ENCODE measurements at regions of chr22 and their contacts with region 1.

Region 1: GRCh38 chr22:20130739-20131596 is 636 bp upstream of the ZDHHC8 start:
- DNase-seq: peak; percentile 58 to 88 (median 82)
- ATAC-seq: peak; percentile 71
- H3K4me3 ChIP-seq: peak overlapping the region; percentile 70
- H3K4me3 Mint-ChIP-seq: peak overlapping the region; percentile 85
- H3K27ac ChIP-seq: peak overlapping the region; percentile 38 to 75
- H3K27ac Mint-ChIP-seq: peak overlapping the region; percentile 79
- H3K4me1 ChIP-seq: peaks cover 54% of the 10 kb centered on the region
- H3K4me1 Mint-ChIP-seq: peaks cover 28% of the 10 kb centered on the region
- H3K27me3 ChIP-seq: no peaks in the 10 kb centered on the region
- H3K27me3 Mint-ChIP-seq: no peaks in the 10 kb centered on the region
- CTCF ChIP-seq: no peak

Region 2: DNA sequence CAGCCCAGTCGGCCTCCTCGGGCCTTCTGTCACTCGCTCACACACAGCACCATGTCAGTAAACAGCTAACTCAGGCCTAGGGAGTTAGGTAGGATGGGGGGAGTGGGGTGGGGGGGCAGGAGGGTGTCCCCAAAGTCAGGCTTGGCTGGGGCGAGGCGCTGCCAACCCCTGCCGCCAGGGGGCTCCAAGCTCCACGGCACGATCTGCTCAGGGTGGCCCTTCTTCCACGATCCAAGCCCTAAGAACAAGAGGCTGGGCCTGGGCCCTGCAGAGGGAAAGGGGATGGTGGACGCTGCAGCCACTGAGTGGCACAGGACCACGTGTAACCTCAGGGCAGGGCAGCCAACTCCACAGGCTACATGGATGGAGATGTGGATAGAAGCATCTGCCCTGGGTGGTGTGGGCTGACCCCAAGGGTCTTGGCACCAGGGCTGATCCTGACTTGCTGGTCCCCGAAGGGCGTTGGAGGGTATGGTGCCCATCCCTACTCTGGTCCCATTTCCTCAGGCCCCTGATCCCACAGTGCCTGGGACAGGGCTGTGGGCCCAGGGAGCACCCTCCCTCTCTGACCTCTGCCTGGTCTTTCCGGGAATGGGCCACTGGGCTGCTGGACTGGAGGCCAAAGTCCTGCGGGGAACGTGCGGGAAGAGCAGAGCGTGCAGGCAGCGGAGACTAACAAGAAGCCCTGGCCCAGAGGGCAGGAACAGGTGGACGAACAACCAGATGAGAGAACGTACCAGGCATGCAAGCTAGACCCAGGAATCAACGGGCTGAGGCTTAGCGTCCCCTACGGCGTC is 160.3 kb before region 1 on chr22:
- CTCF ChIA-PET with region 1: interaction called, 22 read pairs
- POLR2A ChIA-PET with region 1: interaction called, 6 read pairs
- intact Hi-C with region 1: loop called in 1 of 2 experiments (anchors 1 kb)
- DNase-seq: peak; percentile 59 to 85 (median 76)
- ATAC-seq: peak; percentile 87
- H3K4me3 ChIP-seq: no peak overlapping the region
- H3K4me3 Mint-ChIP-seq: no peak overlapping the region
- H3K27ac ChIP-seq: no peak overlapping the region
- H3K27ac Mint-ChIP-seq: no peak overlapping the region
- H3K4me1 ChIP-seq: peaks cover 18% of the 10 kb centered on the region
- H3K4me1 Mint-ChIP-seq: peaks cover 16% of the 10 kb centered on the region
- H3K27me3 ChIP-seq: no peaks in the 10 kb centered on the region
- H3K27me3 Mint-ChIP-seq: no peaks in the 10 kb centered on the region
- CTCF ChIP-seq: peak; percentile 90

Region 3: DNA sequence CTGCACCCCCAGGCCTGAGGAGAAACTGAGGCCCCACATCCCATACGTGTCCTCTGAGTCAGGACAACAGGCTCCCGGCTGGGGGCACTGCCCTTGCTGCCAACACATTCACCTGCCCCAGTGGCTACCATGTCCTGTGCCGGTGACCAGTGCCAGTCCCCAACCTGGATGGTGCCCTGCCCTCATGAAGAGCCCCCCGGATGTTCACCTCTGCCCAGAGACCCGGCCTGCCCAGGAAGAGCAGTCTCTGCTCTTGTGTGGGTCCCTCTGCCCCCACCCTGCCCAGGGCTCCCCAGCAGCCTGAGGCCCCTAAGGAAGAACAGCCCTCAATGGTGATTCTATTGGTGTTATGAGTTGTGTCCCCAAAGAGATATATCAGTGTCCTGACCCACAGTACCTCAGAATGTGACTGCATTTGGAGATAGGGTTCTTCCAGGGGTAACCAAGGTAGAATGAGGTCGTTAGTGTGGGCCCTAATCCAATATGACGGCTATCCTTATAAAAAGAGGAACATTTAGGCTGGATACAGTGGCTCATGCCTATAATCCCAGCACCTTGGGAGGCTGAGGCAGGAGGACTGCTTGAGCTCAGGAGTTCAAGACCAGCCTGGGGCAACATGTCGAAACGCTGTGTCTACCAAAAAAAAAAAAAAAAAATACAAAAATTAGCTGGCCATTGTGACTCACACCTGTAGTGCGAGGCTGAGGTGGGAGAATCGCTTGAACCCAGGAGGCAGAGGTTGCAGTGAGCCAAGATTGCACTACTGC is 64.2 kb before region 1 on chr22:
- CTCF ChIA-PET with region 1: no interaction called
- POLR2A ChIA-PET with region 1: no interaction called
- intact Hi-C with region 1: no loop called
- DNase-seq: no peak
- ATAC-seq: no peak
- H3K4me3 ChIP-seq: no peak overlapping the region
- H3K4me3 Mint-ChIP-seq: no peak overlapping the region
- H3K27ac ChIP-seq: no peak overlapping the region
- H3K27ac Mint-ChIP-seq: no peak overlapping the region
- H3K4me1 ChIP-seq: no peaks in the 10 kb centered on the region
- H3K4me1 Mint-ChIP-seq: no peaks in the 10 kb centered on the region
- H3K27me3 ChIP-seq: no peaks in the 10 kb centered on the region
- H3K27me3 Mint-ChIP-seq: no peaks in the 10 kb centered on the region
- CTCF ChIP-seq: no peak

Region 4: DNA sequence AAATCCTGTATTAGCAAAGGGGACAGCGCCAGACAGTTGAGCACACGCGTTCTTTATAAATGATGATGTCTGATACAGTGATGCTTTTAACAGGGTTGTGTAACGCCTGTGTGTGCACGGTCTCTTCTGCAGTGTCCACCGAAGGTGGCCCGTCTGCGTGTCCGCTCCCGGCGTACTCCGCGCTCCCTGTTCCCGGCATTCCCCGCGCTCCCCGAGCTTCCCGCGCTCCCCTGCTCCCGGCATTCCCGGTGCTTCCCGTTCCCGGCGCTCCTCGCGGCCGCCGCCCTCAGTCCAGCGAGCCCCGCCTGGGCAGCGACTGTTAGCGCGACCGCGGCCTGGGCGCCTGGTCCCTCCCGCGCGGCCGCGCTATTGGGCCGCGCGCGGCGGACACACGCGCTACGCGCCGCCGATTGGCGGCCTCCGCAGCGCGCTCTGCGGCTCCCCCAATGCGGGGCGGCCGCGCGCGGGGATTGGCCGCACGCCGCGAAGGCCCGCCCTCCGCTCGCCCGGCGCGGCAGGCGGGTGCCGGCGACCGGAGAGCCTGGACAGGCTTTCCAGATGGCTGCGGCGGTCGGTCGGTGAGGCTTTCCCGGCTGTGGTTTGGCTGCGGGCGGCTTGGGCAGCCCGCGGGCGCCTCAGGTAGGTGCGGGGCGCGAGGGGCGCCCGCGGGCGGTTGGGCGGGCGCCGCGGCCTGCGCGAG is 51.1 kb before region 1 on chr22 and contains the start of gene DGCR8:
- CTCF ChIA-PET with region 1: interaction called, 3 read pairs
- POLR2A ChIA-PET with region 1: no interaction called
- intact Hi-C with region 1: loop called in 1 of 2 experiments (anchors 2 kb)
- DNase-seq: peak; percentile 24 to 92 (median 62)
- ATAC-seq: peak; percentile 89
- H3K4me3 ChIP-seq: peak within 1 kb of the TSS; percentile 76
- H3K4me3 Mint-ChIP-seq: peak within 1 kb of the TSS; percentile 99
- H3K27ac ChIP-seq: peak within 1 kb of the TSS; percentile 52 to 53
- H3K27ac Mint-ChIP-seq: peak within 1 kb of the TSS; percentile 90
- H3K4me1 ChIP-seq: peaks cover 45% of the 10 kb centered on the region
- H3K4me1 Mint-ChIP-seq: peaks cover 44% of the 10 kb centered on the region
- H3K27me3 ChIP-seq: no peaks in the 10 kb centered on the region
- H3K27me3 Mint-ChIP-seq: no peaks in the 10 kb centered on the region
- CTCF ChIP-seq: no peak
- total RNA-seq, gene DGCR8: 17.8 to 18.5 TPM

Region 5: GRCh38 chr22:20205964-20206708 is 75.2 kb after region 1 on chr22:
- CTCF ChIA-PET with region 1: no interaction called
- POLR2A ChIA-PET with region 1: no interaction called
- intact Hi-C with region 1: loop called in 1 of 2 experiments (anchors 5 kb)
- DNase-seq: peak; percentile 38 to 86 (median 66)
- ATAC-seq: peak; percentile 97
- H3K4me3 ChIP-seq: peak overlapping the region; percentile 75
- H3K4me3 Mint-ChIP-seq: peak overlapping the region; percentile 97
- H3K27ac ChIP-seq: peak overlapping the region; percentile 70 to 73
- H3K27ac Mint-ChIP-seq: peak overlapping the region; percentile 90
- H3K4me1 ChIP-seq: peaks cover 40% of the 10 kb centered on the region
- H3K4me1 Mint-ChIP-seq: peaks cover 27% of the 10 kb centered on the region
- H3K27me3 ChIP-seq: no peaks in the 10 kb centered on the region
- H3K27me3 Mint-ChIP-seq: no peaks in the 10 kb centered on the region
- CTCF ChIP-seq: no peak

Measured in CD4-positive, alpha-beta T cell (primary cell).